Activated naive CD4-positive, alpha-beta T cell treated with anti-CD3 and anti-CD28 coated beads for 36 hours (primary cell): ENCODE measurements at regions of chr16 and their contacts with region 1.

Region 1: GRCh38 chr16:15643048-15643945 is at the start of gene MARF1:
- DNase-seq: peak; percentile 99
- H3K4me3 Mint-ChIP-seq: peak within 1 kb of the TSS; percentile 85
- H3K27ac Mint-ChIP-seq: peak within 1 kb of the TSS; percentile 99
- H3K4me1 Mint-ChIP-seq: peaks cover 61% of the 10 kb centered on the region
- H3K27me3 Mint-ChIP-seq: no peaks in the 10 kb centered on the region
- total RNA-seq, gene MARF1: 72.6 to 80.2 TPM

Region 2: GRCh38 chr16:15427648-15428239 is 215.6 kb before region 1 on chr16:
- CTCF ChIA-PET with region 1: interaction called, 5 read pairs
- intact Hi-C with region 1: loop called (anchors 1 kb)
- DNase-seq: peak; percentile 77
- H3K4me3 Mint-ChIP-seq: no peak overlapping the region
- H3K27ac Mint-ChIP-seq: no peak overlapping the region
- H3K4me1 Mint-ChIP-seq: peaks cover 3% of the 10 kb centered on the region
- H3K27me3 Mint-ChIP-seq: no peaks in the 10 kb centered on the region

Region 3: GRCh38 chr16:15477802-15478201 is 165.5 kb before region 1 on chr16:
- CTCF ChIA-PET with region 1: no interaction called
- intact Hi-C with region 1: loop called (anchors 5 kb)
- DNase-seq: no peak
- H3K4me3 Mint-ChIP-seq: no peak overlapping the region
- H3K27ac Mint-ChIP-seq: peak overlapping the region; percentile 60
- H3K4me1 Mint-ChIP-seq: peaks cover 26% of the 10 kb centered on the region
- H3K27me3 Mint-ChIP-seq: no peaks in the 10 kb centered on the region

Region 4: GRCh38 chr16:15672514-15673167 is 29.3 kb after region 1 on chr16:
- CTCF ChIA-PET with region 1: interaction called, 3 read pairs
- intact Hi-C with region 1: loop called (anchors 2 kb)
- DNase-seq: peak; percentile 90
- H3K4me3 Mint-ChIP-seq: peak overlapping the region; percentile 62
- H3K27ac Mint-ChIP-seq: peak overlapping the region; percentile 89
- H3K4me1 Mint-ChIP-seq: peaks cover 43% of the 10 kb centered on the region
- H3K27me3 Mint-ChIP-seq: no peaks in the 10 kb centered on the region

Region 5: DNA sequence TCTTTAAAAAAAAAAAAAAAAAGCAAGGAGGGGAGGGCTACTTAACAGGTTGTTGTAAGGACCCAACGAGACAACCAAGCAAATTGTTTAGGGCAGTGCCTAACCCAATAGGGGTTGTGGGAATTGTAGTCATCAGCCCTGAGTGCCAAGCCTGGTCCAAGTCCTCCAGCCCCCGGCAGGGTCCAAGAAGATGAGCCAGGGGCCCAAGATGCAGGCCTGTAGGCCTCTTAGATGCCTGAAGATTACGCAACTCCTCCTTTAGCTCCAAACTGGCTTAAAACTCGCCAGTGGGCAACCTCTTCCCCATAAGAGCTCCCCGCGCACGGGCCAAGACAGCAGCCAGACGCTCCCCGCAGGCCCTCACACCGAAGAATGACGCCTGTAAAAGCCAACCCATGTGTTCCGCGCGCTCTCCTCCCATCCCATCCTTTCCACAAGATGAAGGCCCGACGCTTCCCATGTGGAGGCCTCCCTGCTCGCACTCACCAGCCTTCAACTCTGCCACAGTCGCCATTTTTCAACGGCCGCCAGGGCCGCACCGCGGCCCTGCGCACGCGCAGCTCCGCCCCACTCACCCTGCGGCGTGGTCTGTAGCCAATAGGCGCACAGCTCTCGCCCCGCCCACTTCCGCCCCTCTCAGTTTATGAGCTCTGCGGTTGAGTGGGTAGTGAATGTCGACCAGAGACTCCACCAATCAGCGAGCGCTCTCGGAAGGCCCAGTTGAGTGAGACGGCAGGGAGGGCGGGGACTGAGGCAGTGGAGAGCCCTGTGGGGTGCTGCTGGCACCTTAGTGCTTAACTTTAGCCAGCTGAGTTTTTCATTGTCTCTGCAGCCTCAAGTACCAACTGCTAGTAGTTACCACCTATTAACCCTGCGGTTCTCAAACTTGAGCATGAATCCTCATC is 245.0 kb after region 1 on chr16 and contains the start of gene CEP20:
- CTCF ChIA-PET with region 1: no interaction called
- intact Hi-C with region 1: loop called (anchors 5 kb)
- DNase-seq: peak; percentile 100
- H3K4me3 Mint-ChIP-seq: peak within 1 kb of the TSS; percentile 100
- H3K27ac Mint-ChIP-seq: peak within 1 kb of the TSS; percentile 94
- H3K4me1 Mint-ChIP-seq: peaks cover 31% of the 10 kb centered on the region
- H3K27me3 Mint-ChIP-seq: no peaks in the 10 kb centered on the region
- total RNA-seq, gene CEP20: 49.0 to 57.0 TPM

Region 6: GRCh38 chr16:15942931-15943690 is 299.8 kb after region 1 on chr16:
- CTCF ChIA-PET with region 1: no interaction called
- intact Hi-C with region 1: no loop called
- DNase-seq: no peak
- H3K4me3 Mint-ChIP-seq: no peak overlapping the region
- H3K27ac Mint-ChIP-seq: no peak overlapping the region
- H3K4me1 Mint-ChIP-seq: peaks cover 15% of the 10 kb centered on the region
- H3K27me3 Mint-ChIP-seq: no peaks in the 10 kb centered on the region

Region 7: GRCh38 chr16:15961060-15961511 is 317.8 kb after region 1 on chr16:
- CTCF ChIA-PET with region 1: no interaction called
- intact Hi-C with region 1: loop called (anchors 5 kb)
- DNase-seq: peak; percentile 93
- H3K4me3 Mint-ChIP-seq: peak overlapping the region; percentile 81
- H3K27ac Mint-ChIP-seq: peak overlapping the region; percentile 99
- H3K4me1 Mint-ChIP-seq: peaks cover 81% of the 10 kb centered on the region
- H3K27me3 Mint-ChIP-seq: no peaks in the 10 kb centered on the region